ENCODE measurements at regions of chr13 and their contacts with region 1.

Region 1: GRCh38 chr13:46796515-46797474 is at the start of gene ESD:
- DNase-seq: peak; percentile 97
- H3K4me3 Mint-ChIP-seq: peak within 1 kb of the TSS; percentile 95
- H3K27ac Mint-ChIP-seq: peak within 1 kb of the TSS; percentile 96
- H3K4me1 Mint-ChIP-seq: peaks cover 38% of the 10 kb centered on the region
- H3K27me3 Mint-ChIP-seq: no peaks in the 10 kb centered on the region
- total RNA-seq, gene ESD: 137 to 146 TPM

Region 2: DNA sequence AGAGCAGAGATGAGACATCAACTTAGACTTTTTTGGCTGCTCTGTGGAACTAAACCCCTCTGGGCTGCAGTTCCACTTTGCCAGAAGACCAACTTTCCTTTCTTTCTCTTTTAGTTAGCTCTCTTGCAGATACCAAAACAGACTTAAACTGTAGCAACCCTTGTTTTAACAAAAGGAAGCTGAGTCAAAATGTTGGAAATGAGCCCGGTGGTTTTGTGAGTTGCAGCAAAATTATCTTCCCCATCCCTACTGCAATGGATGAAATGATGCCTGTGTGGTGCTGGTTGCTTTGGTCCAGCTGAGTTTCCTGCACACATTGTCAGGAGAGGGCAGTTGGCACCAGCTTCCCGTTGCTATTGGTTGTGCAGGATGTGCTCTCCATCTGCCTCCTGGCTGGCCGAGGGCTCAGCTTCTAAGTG is 128.5 kb before region 1 on chr13:
- CTCF ChIA-PET with region 1: no interaction called
- POLR2A ChIA-PET with region 1: no interaction called
- intact Hi-C with region 1: loop called (anchors 2 kb)
- DNase-seq: peak; percentile 53
- H3K4me3 Mint-ChIP-seq: peak overlapping the region; percentile 76
- H3K27ac Mint-ChIP-seq: peak overlapping the region; percentile 82
- H3K4me1 Mint-ChIP-seq: peaks cover 37% of the 10 kb centered on the region
- H3K27me3 Mint-ChIP-seq: no peaks in the 10 kb centered on the region

Region 3: DNA sequence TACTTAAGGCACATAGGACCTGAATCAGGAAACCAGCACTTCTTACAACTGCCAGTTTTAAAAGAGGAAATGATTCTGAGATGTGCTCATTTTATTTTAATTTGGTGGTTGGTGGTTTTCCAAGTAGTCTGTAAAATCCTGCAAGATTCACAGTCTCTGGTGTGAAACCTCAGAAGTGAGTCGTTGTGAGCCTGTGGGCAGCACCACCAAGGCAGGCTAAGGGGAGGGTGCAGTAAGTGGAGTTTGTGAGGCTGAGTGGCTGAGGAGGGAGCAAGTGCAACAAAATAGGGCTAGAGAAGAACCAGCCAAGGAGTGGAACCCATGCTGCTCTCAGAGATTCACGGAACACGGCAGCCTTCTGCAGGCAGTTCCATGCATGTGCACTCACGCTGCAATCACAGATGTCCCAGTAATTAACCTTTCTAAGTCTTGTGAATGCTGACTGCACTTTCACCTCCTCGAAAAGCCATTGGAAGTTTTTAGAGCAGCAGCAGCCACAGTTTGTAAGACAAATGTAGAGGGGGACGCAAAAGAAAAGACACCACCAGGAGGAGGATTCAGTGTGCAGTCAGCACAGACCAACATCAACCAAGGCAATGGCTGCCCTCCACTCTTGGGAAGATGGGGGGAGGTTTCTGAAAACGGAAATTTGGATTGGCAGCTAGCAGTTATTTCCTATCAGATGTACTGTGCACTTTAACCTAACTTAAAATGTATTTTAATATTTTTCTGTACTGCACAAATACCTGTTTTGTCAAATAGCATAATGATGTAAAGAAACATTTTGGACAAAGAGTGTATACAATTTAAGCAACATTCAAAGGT is 44.8 kb before region 1 on chr13:
- CTCF ChIA-PET with region 1: interaction called, 3 read pairs
- POLR2A ChIA-PET with region 1: no interaction called
- intact Hi-C with region 1: loop called (anchors 2 kb)
- DNase-seq: peak; percentile 74
- H3K4me3 Mint-ChIP-seq: peak overlapping the region; percentile 4
- H3K27ac Mint-ChIP-seq: no peak overlapping the region
- H3K4me1 Mint-ChIP-seq: peaks cover 16% of the 10 kb centered on the region
- H3K27me3 Mint-ChIP-seq: no peaks in the 10 kb centered on the region

Region 4: GRCh38 chr13:48000778-48001628 is 1204.2 kb after region 1 on chr13 and contains the start of gene SUCLA2:
- CTCF ChIA-PET with region 1: no interaction called
- POLR2A ChIA-PET with region 1: no interaction called
- intact Hi-C with region 1: loop called (anchors 10 kb)
- DNase-seq: peak; percentile 93
- H3K4me3 Mint-ChIP-seq: peak within 1 kb of the TSS; percentile 93
- H3K27ac Mint-ChIP-seq: peak within 1 kb of the TSS; percentile 69
- H3K4me1 Mint-ChIP-seq: peaks cover 29% of the 10 kb centered on the region
- H3K27me3 Mint-ChIP-seq: no peaks in the 10 kb centered on the region
- total RNA-seq, gene SUCLA2: 39.2 to 41.3 TPM

Region 5: DNA sequence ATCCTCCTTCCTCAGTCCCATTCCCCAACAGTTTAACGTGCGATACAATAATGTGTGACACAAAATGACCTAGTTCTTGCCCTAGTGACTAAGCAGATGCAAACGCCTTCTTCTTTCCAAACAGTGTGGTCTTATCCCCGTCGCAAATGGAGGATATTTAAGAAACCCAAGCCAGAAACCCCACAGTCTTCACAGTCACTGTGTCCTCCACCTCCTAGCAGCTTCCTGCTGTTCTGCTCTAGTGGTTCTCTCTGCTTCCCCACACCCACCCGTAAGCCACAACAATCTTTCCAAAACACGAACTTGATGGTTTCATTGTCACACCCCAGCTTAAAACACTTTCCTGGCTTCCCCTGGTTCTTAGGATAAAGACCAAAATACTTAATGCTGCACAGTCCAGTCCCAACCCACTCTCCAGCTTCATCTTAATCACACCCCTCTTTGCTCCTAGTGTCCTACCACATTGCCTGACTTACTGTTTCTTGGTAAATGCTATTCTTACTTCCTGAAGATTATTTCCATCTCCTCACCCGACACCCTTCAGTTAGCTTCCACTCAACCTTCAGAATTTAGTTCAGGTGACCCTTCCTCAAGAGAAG is 1468.5 kb after region 1 on chr13:
- CTCF ChIA-PET with region 1: no interaction called
- POLR2A ChIA-PET with region 1: no interaction called
- intact Hi-C with region 1: no loop called
- DNase-seq: peak; percentile 40
- H3K4me3 Mint-ChIP-seq: no peak overlapping the region
- H3K27ac Mint-ChIP-seq: peak overlapping the region; percentile 4
- H3K4me1 Mint-ChIP-seq: peaks cover 43% of the 10 kb centered on the region
- H3K27me3 Mint-ChIP-seq: no peaks in the 10 kb centered on the region

Measured in activated CD4-positive, alpha-beta memory T cell treated with anti-CD3 and anti-CD28 coated beads for 36 hours (primary cell).